ENCODE measurements at regions of chr11 and their contacts with region 1.

Region 1: DNA sequence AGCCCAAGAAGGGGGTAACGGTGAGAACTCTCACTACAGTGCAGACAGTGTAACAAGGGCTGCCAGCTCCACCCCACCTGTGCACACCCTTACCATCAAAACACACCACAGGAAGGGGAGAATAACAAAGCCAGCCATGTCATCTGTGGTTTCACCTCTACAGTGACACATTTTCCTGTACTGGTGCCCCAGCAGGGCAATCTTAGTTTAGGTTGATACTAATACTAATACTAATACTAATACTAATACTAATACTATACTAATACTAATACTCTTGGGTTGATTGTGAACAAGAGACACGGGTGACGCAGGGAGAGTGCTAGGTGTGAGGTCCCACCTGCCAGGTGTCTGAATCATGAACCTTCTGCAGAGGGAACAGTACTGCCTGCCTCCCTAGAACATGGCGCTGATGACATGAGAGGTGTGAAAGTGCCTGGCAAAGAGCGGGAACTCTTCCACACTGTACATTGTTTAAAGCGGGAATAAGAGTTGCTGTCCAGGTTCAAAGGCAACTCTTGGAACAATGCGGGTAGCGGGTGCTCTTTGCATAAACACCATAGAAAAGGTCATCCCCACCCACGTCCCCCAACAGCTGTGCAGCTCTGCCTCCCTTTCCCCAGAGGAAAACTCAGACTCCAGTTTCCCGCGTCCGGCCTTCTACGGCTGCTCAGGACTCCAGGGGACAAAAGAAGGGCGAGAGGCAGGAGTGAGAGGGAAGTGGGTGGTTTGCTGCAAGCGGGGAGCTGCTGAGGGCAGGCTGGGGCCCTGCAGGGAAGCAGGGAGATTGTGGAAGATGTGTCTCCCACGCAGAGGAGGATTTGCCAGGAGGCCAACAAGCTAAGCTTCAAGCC is 25.0 kb upstream of the TMPRSS4 start:
- DNase-seq: peak; percentile 63 to 94 (median 74)
- ATAC-seq: peak; percentile 95
- H3K4me3 ChIP-seq: no peak overlapping the region
- H3K4me3 Mint-ChIP-seq: peak overlapping the region; percentile 81
- H3K27ac ChIP-seq: peak overlapping the region; percentile 48 to 68
- H3K27ac Mint-ChIP-seq: peak overlapping the region; percentile 95
- H3K4me1 ChIP-seq: peaks cover 66% of the 10 kb centered on the region
- H3K4me1 Mint-ChIP-seq: peaks cover 65% of the 10 kb centered on the region
- H3K27me3 ChIP-seq: no peaks in the 10 kb centered on the region
- H3K27me3 Mint-ChIP-seq: no peaks in the 10 kb centered on the region
- CTCF ChIP-seq: no peak

Region 2: GRCh38 chr11:117807482-117808327 is 244.1 kb before region 1 on chr11:
- CTCF ChIA-PET with region 1: interaction called, 25 read pairs
- POLR2A ChIA-PET with region 1: interaction called, 13 read pairs
- intact Hi-C with region 1: loop called (anchors 1 kb)
- DNase-seq: peak; percentile 55 to 88 (median 72)
- ATAC-seq: peak; percentile 85
- H3K4me3 ChIP-seq: no peak overlapping the region
- H3K4me3 Mint-ChIP-seq: no peak overlapping the region
- H3K27ac ChIP-seq: no peak overlapping the region
- H3K27ac Mint-ChIP-seq: no peak overlapping the region
- H3K4me1 ChIP-seq: peaks cover 21% of the 10 kb centered on the region
- H3K4me1 Mint-ChIP-seq: peaks cover 13% of the 10 kb centered on the region
- H3K27me3 ChIP-seq: no peaks in the 10 kb centered on the region
- H3K27me3 Mint-ChIP-seq: no peaks in the 10 kb centered on the region
- CTCF ChIP-seq: peak; percentile 94

Region 3: DNA sequence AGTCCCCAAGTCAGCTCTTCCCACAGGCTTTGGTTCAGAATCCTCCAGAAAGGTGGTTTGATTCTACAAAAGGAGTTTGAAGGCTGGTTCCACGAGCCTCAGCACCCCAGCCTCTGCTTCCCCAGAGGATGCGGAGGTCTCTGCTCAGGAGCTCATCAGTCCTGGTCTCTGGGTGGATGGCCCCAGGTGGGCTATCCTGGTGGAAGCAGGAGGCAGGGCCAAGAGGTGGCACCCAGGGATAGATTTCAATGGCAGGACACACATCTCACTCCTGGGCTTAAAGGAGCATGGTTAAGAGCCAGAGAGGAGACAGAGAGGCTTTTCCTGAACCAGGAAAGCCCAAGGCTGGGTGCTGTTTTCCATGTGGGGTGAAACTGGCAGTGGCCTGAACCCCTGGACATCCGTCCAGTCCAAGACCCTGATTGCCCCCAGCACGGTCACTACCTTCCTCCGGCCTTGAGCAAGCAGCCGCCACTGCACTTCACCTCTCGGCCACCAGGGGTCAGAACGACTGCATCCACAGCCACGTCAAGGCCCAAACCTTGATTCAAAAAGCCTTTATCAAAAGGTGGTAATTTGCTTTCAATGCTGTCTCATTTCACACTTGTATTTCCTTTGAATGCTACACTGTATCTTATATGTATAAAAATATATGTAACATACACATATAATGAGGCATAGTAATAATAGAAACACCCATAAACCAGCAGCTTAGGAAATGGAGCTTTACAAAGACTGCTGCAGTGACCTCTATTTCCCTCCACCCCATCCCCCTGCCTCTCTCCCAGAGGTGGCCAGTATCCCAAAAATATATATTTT is 208.0 kb before region 1 on chr11:
- CTCF ChIA-PET with region 1: interaction called, 33 read pairs
- POLR2A ChIA-PET with region 1: interaction called, 10 read pairs
- intact Hi-C with region 1: loop called (anchors 1 kb)
- DNase-seq: peak; percentile 67 to 91 (median 82)
- ATAC-seq: peak; percentile 91
- H3K4me3 ChIP-seq: no peak overlapping the region
- H3K4me3 Mint-ChIP-seq: no peak overlapping the region
- H3K27ac ChIP-seq: no peak overlapping the region
- H3K27ac Mint-ChIP-seq: no peak overlapping the region
- H3K4me1 ChIP-seq: peaks cover 18% of the 10 kb centered on the region
- H3K4me1 Mint-ChIP-seq: no peaks in the 10 kb centered on the region
- H3K27me3 ChIP-seq: no peaks in the 10 kb centered on the region
- H3K27me3 Mint-ChIP-seq: no peaks in the 10 kb centered on the region
- CTCF ChIP-seq: peak; percentile 98

Region 4: GRCh38 chr11:117985953-117986887 is 65.6 kb before region 1 on chr11 and contains the start of gene IL10RA:
- CTCF ChIA-PET with region 1: interaction called, 19 read pairs
- POLR2A ChIA-PET with region 1: interaction called, 87 read pairs
- intact Hi-C with region 1: loop called (anchors 1 to 2 kb)
- DNase-seq: peak; percentile 57 to 93 (median 78)
- ATAC-seq: peak; percentile 72
- H3K4me3 ChIP-seq: peak within 1 kb of the TSS; percentile 98
- H3K4me3 Mint-ChIP-seq: peak within 1 kb of the TSS; percentile 90
- H3K27ac ChIP-seq: peak within 1 kb of the TSS; percentile 88 to 93
- H3K27ac Mint-ChIP-seq: peak within 1 kb of the TSS; percentile 87
- H3K4me1 ChIP-seq: peaks cover 66% of the 10 kb centered on the region
- H3K4me1 Mint-ChIP-seq: peaks cover 72% of the 10 kb centered on the region
- H3K27me3 ChIP-seq: no peaks in the 10 kb centered on the region
- H3K27me3 Mint-ChIP-seq: no peaks in the 10 kb centered on the region
- CTCF ChIP-seq: no peak
- total RNA-seq, gene IL10RA: 193 to 203 TPM

Region 5: DNA sequence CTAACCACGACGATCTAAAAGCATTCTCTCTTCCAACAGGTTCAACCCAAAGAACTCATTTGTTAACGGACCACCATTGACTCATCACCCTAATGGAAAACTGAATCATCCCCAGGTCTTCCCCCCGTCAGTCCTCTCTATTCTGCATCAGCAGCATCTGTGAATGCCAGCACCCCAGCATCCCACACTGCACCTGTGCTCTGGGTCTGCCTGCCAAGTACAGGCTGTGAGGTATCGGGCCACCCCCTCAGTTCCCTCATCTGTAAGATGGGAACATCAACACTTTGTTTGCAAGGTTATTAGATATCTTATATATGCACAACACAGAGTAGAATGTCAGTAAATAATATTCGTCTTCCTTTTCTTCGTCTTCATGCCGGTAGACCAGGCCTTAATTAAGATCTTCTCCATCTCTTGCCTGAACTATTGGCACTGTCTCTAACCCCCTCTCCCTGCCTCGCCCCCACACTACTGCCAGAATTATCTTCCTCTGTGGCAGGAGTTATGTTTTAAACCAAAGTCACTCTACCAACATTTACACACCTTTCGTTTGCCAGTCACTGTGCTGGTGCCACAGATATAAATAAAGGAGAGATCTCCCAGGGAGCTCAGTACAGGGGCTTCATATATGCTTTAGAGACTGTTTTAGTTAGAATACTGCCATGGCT is 17.2 kb after region 1 on chr11:
- CTCF ChIA-PET with region 1: no interaction called
- POLR2A ChIA-PET with region 1: no interaction called
- intact Hi-C with region 1: no loop called
- DNase-seq: no peak
- ATAC-seq: no peak
- H3K4me3 ChIP-seq: no peak overlapping the region
- H3K4me3 Mint-ChIP-seq: no peak overlapping the region
- H3K27ac ChIP-seq: no peak overlapping the region
- H3K27ac Mint-ChIP-seq: no peak overlapping the region
- H3K4me1 ChIP-seq: no peaks in the 10 kb centered on the region
- H3K4me1 Mint-ChIP-seq: no peaks in the 10 kb centered on the region
- H3K27me3 ChIP-seq: peaks cover 0 to 3% of the 10 kb centered on the region in 2 experiments
- H3K27me3 Mint-ChIP-seq: peaks cover 5% of the 10 kb centered on the region
- CTCF ChIP-seq: no peak

Measured in CD4-positive, alpha-beta T cell (primary cell).